ENCODE measurements at regions of chr9 and their contacts with region 1.

Region 1: GRCh38 chr9:124771021-124771866 is at the start of gene NR6A1:
- DNase-seq: peak; percentile 89 to 97
- H3K4me3 ChIP-seq: peak within 1 kb of the TSS; percentile 56 to 86 (median 78)
- H3K27ac ChIP-seq: peak within 1 kb of the TSS; percentile 97
- H3K4me1 ChIP-seq: peaks cover 2 to 13% (median 8%) of the 10 kb centered on the region in 4 experiments; a peak in 6 of 7 replicates
- H3K27me3 ChIP-seq: peaks cover 0 to 4% (median under 1%) of the 10 kb centered on the region in 4 experiments; a peak in 1 of 7 replicates
- CTCF ChIP-seq: no peak
- EP300 ChIP-seq: peak in 1 of 2 experiments; percentile 99; a peak in 2 of 3 replicates
- POLR2A ChIP-seq: peak in 1 of 2 experiments; percentile 76; a peak in 1 of 3 replicates
- RAD21 ChIP-seq: no peak
- total RNA-seq, gene NR6A1: 232 and 237 TPM in 2 replicates

Region 2: DNA sequence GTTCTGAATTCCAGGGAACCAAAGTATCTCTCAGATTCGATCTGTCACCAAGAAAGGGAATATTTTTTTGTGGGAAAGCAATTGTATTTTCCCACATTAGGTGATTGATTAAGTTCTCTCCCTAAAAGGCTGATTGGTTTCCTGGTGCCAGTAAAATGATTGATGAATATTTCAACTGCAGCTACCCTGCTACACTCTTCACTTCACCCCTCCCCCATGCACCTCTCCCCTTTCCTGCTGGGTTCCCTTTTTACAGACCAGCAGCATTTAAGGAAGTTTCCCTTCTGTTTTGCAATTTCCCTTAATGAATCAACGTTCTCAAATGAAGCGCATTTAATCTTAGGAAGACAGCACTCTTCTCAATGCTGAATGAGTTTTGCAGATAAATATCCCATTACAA is 13.2 kb before region 1 on chr9:
- CTCF ChIA-PET with region 1: interaction called, 11 read pairs
- POLR2A ChIA-PET with region 1: interaction called, 50 read pairs
- DNase-seq: no peak
- H3K4me3 ChIP-seq: peak overlapping the region; percentile 22 to 56 (median 24); a peak in 6 of 8 replicates
- H3K27ac ChIP-seq: peak overlapping the region; percentile 46; the same call in 1 of the 2 replicates
- H3K4me1 ChIP-seq: peaks cover 15 to 55% (median 29%) of the 10 kb centered on the region in 4 experiments
- H3K27me3 ChIP-seq: no peaks in the 10 kb centered on the region
- CTCF ChIP-seq: no peak
- EP300 ChIP-seq: peak in 1 of 2 experiments; percentile 51; a peak in 1 of 3 replicates
- POLR2A ChIP-seq: no peak
- RAD21 ChIP-seq: no peak

Region 3: DNA sequence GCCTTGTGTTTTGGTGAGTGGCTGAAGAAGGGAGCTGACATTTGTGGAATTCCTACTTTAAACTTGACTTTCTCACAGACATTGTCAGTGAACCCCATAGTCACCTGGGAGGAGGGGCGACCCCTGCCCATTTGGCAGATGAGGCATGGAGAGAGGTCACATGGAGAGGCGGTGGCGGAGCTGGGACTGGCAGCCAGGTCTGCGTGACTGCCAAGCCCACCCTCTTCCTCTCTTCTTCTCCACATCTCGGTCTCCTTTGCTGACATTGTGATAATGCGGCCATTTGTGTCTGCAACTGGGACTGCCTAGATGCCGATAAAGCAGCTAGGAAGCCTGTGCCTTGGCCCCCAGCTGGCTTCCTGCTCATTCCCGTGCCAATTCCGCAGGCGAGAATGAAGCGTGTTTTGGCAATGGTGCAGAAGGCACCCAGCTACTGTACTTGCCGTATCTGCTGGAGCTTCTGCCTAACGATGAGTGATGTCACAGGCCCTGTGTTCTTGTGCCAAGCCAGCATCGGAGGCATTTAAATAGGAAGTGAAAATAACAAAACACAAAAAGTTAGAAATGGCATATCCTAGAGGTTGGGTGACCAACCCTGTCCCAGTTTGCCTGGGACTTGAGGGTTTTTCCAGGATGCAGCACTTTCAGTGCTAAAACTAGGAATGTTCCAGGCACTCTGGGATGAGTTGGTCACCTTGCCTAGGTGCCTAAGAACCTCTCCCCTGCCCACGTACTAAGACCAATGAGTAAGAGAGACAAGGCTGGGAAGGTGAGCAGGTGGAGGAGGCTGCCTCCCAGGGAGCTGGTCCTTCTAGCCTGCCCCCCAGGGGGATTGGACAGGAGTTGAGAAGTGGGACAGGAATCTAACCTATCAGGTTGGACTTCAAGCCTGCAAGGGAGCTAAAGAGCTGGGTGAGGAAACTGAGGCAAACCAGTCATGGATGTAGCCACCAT is 29.3 kb after region 1 on chr9:
- CTCF ChIA-PET with region 1: interaction called, 281 read pairs
- POLR2A ChIA-PET with region 1: interaction called, 3 read pairs
- DNase-seq: no peak
- H3K4me3 ChIP-seq: no peak overlapping the region
- H3K27ac ChIP-seq: no peak overlapping the region
- H3K4me1 ChIP-seq: peaks cover 0 to 12% (median 0%) of the 10 kb centered on the region in 4 experiments; a peak in 2 of 7 replicates
- H3K27me3 ChIP-seq: no peaks in the 10 kb centered on the region
- CTCF ChIP-seq: no peak
- EP300 ChIP-seq: no peak
- POLR2A ChIP-seq: no peak
- RAD21 ChIP-seq: no peak

Region 4: GRCh38 chr9:124818431-124819281 is 47.4 kb after region 1 on chr9:
- CTCF ChIA-PET with region 1: interaction called, 174 read pairs
- POLR2A ChIA-PET with region 1: interaction called, 6 read pairs
- DNase-seq: no peak
- H3K4me3 ChIP-seq: no peak overlapping the region
- H3K27ac ChIP-seq: no peak overlapping the region
- H3K4me1 ChIP-seq: peaks cover 0 to 5% (median 2%) of the 10 kb centered on the region in 4 experiments; a peak in 5 of 7 replicates
- H3K27me3 ChIP-seq: no peaks in the 10 kb centered on the region
- CTCF ChIP-seq: peak; percentile 25 to 29 (median 29); a peak in 3 of 4 replicates
- EP300 ChIP-seq: peak in 1 of 2 experiments; percentile 57; a peak in 1 of 3 replicates
- POLR2A ChIP-seq: no peak
- RAD21 ChIP-seq: peak; percentile 32 to 51; a peak in 3 of 4 replicates

Region 5: DNA sequence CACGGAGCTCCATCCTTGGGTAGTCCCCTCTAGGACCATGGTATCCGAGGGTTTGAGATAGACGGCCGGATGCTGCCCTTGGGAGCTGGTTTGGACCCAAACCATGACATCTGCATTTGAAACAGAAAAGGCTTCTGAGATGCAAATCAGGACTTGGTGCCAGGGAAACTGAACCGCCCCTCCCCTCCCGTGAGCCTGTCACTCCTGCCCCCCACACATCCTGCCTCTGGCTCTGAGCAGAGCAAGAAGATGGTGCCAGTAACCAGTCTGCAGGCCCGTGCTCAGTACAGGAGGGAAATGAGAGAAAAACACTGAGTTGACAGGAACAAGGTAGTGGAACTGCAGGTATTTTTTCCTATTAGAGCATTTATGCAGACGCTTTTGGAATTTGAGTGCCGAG is 109.3 kb after region 1 on chr9:
- CTCF ChIA-PET with region 1: interaction called, 39 read pairs
- POLR2A ChIA-PET with region 1: interaction called, 4 read pairs
- DNase-seq: peak in 1 of 2 experiments; percentile 66
- H3K4me3 ChIP-seq: peak overlapping the region in 1 of 4 experiments; percentile 27; a peak in 2 of 8 replicates
- H3K27ac ChIP-seq: no peak overlapping the region
- H3K4me1 ChIP-seq: peaks cover 5 to 18% (median 13%) of the 10 kb centered on the region in 4 experiments
- H3K27me3 ChIP-seq: no peaks in the 10 kb centered on the region
- CTCF ChIP-seq: no peak
- EP300 ChIP-seq: no peak
- POLR2A ChIP-seq: no peak
- RAD21 ChIP-seq: no peak

Region 6: GRCh38 chr9:124906966-124907365 is 135.7 kb after region 1 on chr9:
- CTCF ChIA-PET with region 1: no interaction called
- POLR2A ChIA-PET with region 1: no interaction called
- DNase-seq: no peak
- H3K4me3 ChIP-seq: no peak overlapping the region
- H3K27ac ChIP-seq: no peak overlapping the region
- H3K4me1 ChIP-seq: peaks cover 0 to 2% (median 0%) of the 10 kb centered on the region in 4 experiments; a peak in 2 of 7 replicates
- H3K27me3 ChIP-seq: no peaks in the 10 kb centered on the region
- CTCF ChIP-seq: no peak
- EP300 ChIP-seq: no peak
- POLR2A ChIP-seq: no peak
- RAD21 ChIP-seq: no peak

Region 7: GRCh38 chr9:124975131-124975530 is 203.9 kb after region 1 on chr9:
- CTCF ChIA-PET with region 1: no interaction called
- POLR2A ChIA-PET with region 1: no interaction called
- DNase-seq: no peak
- H3K4me3 ChIP-seq: no peak overlapping the region
- H3K27ac ChIP-seq: no peak overlapping the region
- H3K4me1 ChIP-seq: no peaks in the 10 kb centered on the region
- H3K27me3 ChIP-seq: no peaks in the 10 kb centered on the region
- CTCF ChIP-seq: no peak
- EP300 ChIP-seq: no peak
- POLR2A ChIP-seq: no peak
- RAD21 ChIP-seq: no peak

Measured in H1 (cell line).